T-cell (primary cell): ENCODE measurements at regions of chr9 and their contacts with region 1.

Region 1: DNA sequence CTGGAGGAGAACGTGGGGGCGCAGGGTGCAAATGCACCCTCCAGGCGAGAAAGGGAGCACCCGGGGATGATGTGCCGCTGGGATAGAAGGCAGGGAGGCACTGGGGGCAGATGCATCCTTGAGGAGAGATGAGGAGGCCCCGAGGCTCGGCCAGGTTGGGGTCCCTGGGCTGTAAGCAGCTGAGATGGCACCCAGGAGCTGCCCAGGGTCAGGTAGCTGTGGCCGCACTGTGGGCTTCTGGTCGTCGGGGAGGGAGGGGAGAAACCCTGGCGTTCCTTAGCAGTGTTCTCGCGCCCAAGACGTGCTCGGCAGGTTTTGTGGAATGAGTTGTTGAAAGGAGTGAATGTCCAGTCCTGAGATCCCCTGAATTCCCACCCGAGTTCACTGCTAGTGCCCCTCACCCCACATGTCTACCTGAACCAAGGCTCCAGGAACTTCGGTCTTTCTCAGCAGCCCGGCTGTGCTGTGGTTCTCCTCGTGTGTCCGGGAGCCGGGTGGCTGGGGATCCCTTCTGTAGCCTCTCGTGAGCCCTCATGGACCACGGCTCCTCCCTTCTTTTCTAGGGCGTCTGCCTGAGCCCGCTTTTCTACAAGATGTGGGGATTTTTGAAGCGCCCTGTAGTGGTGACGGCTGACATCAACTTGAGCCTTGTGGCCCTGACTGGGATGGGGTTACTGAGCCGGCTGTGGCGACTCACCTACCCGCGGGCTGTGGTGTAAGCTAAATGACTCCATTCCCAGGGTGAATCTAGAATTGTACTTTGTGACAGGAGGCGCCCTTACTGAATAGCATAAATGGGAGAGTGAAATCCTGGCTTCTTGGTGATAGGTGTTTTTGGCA is 1.1 kb downstream of the POMT1 start:
- DNase-seq: peak in 34 of 35 experiments; percentile 13 to 78 (median 49)
- ATAC-seq: peak in 2 of 4 experiments; percentile 8 to 40
- H3K4me3 ChIP-seq: peak overlapping the region; percentile 76 to 78
- H3K4me3 Mint-ChIP-seq: peak overlapping the region; percentile 92 to 95 (median 92)
- H3K27ac ChIP-seq: no peak overlapping the region
- H3K27ac Mint-ChIP-seq: peak overlapping the region; percentile 80 to 84
- H3K4me1 ChIP-seq: peaks cover 34 to 54% of the 10 kb centered on the region in 2 experiments
- H3K4me1 Mint-ChIP-seq: peaks cover 51 to 64% (median 57%) of the 10 kb centered on the region in 3 donors
- H3K27me3 ChIP-seq: no peaks in the 10 kb centered on the region
- H3K27me3 Mint-ChIP-seq: no peaks in the 10 kb centered on the region

Region 2: DNA sequence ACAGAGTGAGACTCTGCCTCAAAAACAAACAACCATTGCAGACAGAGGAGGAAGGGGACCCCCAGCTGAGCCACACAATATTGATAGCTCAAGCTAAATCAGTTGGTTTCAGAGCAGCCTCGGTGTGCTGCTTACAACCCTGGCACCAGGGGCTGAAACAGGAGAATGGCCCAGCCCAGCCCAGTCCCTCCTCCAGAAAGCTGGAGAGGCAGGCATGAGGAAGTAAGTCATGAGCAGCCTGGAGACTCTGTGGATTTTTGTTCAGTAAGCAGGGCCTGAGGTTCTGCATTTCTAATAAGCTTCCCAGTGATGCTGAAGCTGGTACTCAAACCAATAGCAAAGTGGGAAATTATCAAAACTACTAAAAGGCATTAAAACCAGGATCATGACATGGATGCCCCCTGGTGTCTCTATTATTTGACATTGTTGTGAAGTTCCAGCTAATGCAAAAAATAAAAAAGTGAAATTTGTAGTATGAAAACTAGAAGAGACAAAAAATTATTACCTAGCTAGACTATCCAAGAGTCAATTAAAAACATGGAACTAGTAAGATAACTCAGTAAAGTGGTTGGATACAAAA is 55.7 kb after region 1 on chr9:
- CTCF ChIA-PET with region 1: no interaction called
- POLR2A ChIA-PET with region 1: no interaction called
- DNase-seq: peak in 1 of 35 experiments; percentile 34
- ATAC-seq: no peak
- H3K4me3 ChIP-seq: no peak overlapping the region
- H3K4me3 Mint-ChIP-seq: no peak overlapping the region
- H3K27ac ChIP-seq: no peak overlapping the region
- H3K27ac Mint-ChIP-seq: no peak overlapping the region
- H3K4me1 ChIP-seq: peaks cover 0 to 5% of the 10 kb centered on the region in 2 experiments
- H3K4me1 Mint-ChIP-seq: peaks cover 4 to 5% (median 5%) of the 10 kb centered on the region in 3 donors
- H3K27me3 ChIP-seq: peaks cover 0 to 14% of the 10 kb centered on the region in 2 experiments
- H3K27me3 Mint-ChIP-seq: peaks cover 16 to 19% of the 10 kb centered on the region in 2 donors

Region 3: GRCh38 chr9:131635285-131635684 is 131.4 kb after region 1 on chr9:
- CTCF ChIA-PET with region 1: no interaction called
- POLR2A ChIA-PET with region 1: interaction called in 1 of 2 experiments, 11 read pairs
- DNase-seq: peak; percentile 45 to 88 (median 70)
- ATAC-seq: peak; percentile 98 to 100 (median 100)
- H3K4me3 ChIP-seq: no peak overlapping the region
- H3K4me3 Mint-ChIP-seq: peak overlapping the region in 1 of 3 donors; percentile 13
- H3K27ac ChIP-seq: peak overlapping the region; percentile 80
- H3K27ac Mint-ChIP-seq: peak overlapping the region; percentile 86 to 88
- H3K4me1 ChIP-seq: peaks cover 6 to 24% of the 10 kb centered on the region in 2 experiments
- H3K4me1 Mint-ChIP-seq: peaks cover 18 to 39% (median 35%) of the 10 kb centered on the region in 3 donors
- H3K27me3 ChIP-seq: no peaks in the 10 kb centered on the region
- H3K27me3 Mint-ChIP-seq: no peaks in the 10 kb centered on the region